ENCODE measurements at regions of chr9 and their contacts with region 1.

Region 1: GRCh38 chr9:126500684-126501382 is 112.9 kb upstream of the LMX1B start:
- DNase-seq: peak; percentile 70 to 94 (median 83)
- ATAC-seq: peak; percentile 76
- H3K4me3 ChIP-seq: no peak overlapping the region
- H3K27ac ChIP-seq: no peak overlapping the region
- H3K4me1 ChIP-seq: peaks cover 6 to 33% of the 10 kb centered on the region in 2 donors
- H3K27me3 ChIP-seq: peaks cover 0 to 15% of the 10 kb centered on the region in 2 donors
- CTCF ChIP-seq: peak; percentile 93 to 98

Region 2: GRCh38 chr9:126357074-126357473 is 143.8 kb before region 1 on chr9:
- intact Hi-C with region 1: no loop called
- DNase-seq: no peak
- ATAC-seq: no peak
- H3K4me3 ChIP-seq: no peak overlapping the region
- H3K27ac ChIP-seq: no peak overlapping the region
- H3K4me1 ChIP-seq: peaks cover 0 to 19% of the 10 kb centered on the region in 2 donors
- H3K27me3 ChIP-seq: no peaks in the 10 kb centered on the region
- CTCF ChIP-seq: no peak

Region 3: DNA sequence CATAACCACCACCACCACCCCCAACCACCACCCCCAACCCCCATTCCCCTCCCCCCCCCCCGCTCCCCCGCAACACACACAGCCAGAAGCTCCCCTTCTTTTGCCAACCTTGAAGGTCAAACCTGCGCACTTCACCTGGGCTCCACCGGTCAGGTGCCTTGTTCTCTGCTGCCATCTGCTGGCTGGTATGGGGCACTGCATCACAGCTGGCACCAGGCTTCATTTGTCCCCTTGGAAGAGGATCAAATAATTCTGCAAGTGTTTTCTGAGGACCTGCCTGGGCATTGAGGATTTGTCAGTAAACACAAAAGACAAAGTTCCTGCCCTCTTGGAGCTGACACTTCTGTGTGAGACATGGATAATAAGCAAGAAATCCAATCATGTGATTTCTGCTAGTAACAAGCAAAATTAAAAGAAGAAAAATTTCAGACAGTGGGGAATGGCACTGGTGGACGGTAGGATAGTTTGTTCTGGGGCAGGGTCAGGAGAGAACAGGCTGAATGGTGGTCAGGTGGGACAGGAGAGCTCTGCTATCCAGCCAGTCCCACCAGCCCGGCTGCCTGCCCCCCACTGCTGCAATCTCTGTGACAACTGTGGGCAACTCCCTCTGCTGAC is 57.3 kb after region 1 on chr9:
- intact Hi-C with region 1: loop called (anchors 2 to 10 kb)
- DNase-seq: peak; percentile 39 to 87 (median 66)
- ATAC-seq: peak; percentile 98
- H3K4me3 ChIP-seq: no peak overlapping the region
- H3K27ac ChIP-seq: no peak overlapping the region
- H3K4me1 ChIP-seq: peaks cover 0 to 4% of the 10 kb centered on the region in 2 donors
- H3K27me3 ChIP-seq: peaks cover 0 to 27% of the 10 kb centered on the region in 2 donors
- CTCF ChIP-seq: peak; percentile 94 to 96

Measured in left lung (tissue), 14 donors.